Dendritic cell treated with granulocyte-macrophage colony-stimulating factor and Interleukin-4, amounts not matched to agents 40 ng/mL and 50 ng/mL, for 4 days (primary cell): ENCODE measurements at regions of chr1 and their contacts with region 1.

Region 1: DNA sequence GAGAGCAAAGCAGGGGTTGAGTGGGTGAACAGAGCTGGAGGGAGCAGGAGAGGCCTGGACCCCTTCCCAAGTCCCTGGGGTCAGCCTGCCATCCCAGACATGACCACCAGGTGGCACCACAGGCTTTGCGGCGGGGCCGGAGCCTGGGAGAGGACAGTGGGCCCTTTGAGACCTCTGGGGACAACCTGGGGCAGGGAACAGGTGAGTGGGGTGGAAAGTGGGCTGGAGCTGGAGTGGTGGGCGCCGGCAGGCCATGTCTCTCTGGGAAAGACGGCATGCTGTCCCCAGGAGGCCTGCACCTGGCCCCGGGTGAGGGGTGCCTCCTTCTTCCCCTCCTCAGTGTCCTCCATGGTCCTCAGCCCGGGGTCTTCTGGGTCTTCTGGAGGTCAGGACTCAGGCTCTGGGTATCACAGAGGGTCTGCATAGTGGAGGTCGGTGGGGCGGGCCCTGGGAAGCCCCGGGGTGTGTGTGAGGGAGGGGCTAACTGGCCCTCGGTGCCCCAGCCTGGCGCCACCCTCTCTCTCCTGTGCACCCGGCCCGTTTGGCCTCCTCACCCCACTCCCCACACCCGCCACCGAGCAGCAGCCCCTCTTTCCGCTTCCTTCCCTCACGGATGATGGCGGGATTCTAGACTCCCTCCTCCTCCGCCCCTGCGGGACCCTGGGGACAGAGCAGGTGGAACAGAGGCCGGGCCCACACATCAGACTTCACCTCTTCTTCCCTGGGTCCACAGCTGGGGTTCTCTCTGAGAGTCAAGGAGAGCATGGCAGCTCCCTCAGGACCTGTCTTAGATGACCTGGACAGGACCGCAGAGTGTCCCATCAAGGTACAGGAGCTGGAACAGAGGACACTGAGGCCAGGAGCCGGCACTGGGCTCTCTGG is 28.4 kb upstream of the PKP1 start:
- H3K4me3 Mint-ChIP-seq: no peak overlapping the region
- H3K27ac Mint-ChIP-seq: no peak overlapping the region
- H3K4me1 Mint-ChIP-seq: no peaks in the 10 kb centered on the region
- H3K27me3 Mint-ChIP-seq: peaks cover 4% of the 10 kb centered on the region

Region 2: GRCh38 chr1:201348211-201348566 is 93.3 kb after region 1 on chr1:
- intact Hi-C with region 1: loop called (anchors 5 kb)
- H3K4me3 Mint-ChIP-seq: no peak overlapping the region
- H3K27ac Mint-ChIP-seq: no peak overlapping the region
- H3K4me1 Mint-ChIP-seq: no peaks in the 10 kb centered on the region
- H3K27me3 Mint-ChIP-seq: peaks cover 17% of the 10 kb centered on the region

Region 3: DNA sequence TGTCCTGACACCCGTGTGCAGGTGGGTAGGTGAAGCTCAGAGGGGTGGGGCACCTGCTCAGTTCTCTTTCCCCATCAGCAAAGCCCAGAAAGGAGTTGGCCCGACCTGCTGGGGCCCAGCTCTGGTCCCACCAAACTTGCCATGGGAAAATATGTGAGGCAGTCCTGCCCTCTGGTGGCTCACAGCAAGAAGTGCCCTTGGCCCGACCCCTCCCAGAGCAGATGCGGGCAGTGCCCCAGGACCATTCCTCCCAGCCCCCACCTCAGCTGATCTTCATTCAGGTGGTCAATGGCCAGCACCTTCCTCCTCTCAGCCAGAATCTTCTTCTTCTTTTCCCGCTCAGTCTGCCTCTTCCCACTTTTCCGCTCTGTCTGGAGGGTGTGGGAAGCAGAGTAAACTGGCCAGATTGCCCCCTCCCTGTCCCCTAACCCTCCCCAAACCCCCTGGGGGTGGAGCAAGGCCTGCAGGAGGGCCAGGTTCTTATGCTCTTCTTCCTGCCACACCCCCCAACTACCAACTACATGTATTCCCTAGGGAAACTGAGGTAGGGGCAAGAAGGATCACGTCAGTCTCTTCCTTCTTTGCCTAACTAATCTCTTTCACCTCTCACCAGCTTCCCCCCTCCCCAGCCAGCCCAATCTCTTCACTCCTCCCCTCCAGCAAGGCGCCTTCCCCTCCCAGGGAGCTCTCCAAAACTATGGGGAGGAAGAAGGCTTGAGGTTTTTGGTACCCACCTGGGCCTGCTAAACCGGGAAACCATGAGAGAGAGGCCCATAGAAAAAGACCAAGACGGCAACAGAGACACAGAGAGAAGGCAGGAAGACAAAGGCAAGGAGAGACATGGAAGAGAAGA is 107.0 kb after region 1 on chr1:
- intact Hi-C with region 1: loop called (anchors 2 kb)
- H3K4me3 Mint-ChIP-seq: no peak overlapping the region
- H3K27ac Mint-ChIP-seq: no peak overlapping the region
- H3K4me1 Mint-ChIP-seq: no peaks in the 10 kb centered on the region
- H3K27me3 Mint-ChIP-seq: peaks cover 11% of the 10 kb centered on the region

Region 4: GRCh38 chr1:201406831-201407406 is 152.1 kb after region 1 on chr1:
- intact Hi-C with region 1: loop called (anchors 2 kb)
- H3K4me3 Mint-ChIP-seq: no peak overlapping the region
- H3K27ac Mint-ChIP-seq: no peak overlapping the region
- H3K4me1 Mint-ChIP-seq: no peaks in the 10 kb centered on the region
- H3K27me3 Mint-ChIP-seq: peaks cover 6% of the 10 kb centered on the region